ENCODE measurements at regions of chr11 and their contacts with region 1.

Region 1: DNA sequence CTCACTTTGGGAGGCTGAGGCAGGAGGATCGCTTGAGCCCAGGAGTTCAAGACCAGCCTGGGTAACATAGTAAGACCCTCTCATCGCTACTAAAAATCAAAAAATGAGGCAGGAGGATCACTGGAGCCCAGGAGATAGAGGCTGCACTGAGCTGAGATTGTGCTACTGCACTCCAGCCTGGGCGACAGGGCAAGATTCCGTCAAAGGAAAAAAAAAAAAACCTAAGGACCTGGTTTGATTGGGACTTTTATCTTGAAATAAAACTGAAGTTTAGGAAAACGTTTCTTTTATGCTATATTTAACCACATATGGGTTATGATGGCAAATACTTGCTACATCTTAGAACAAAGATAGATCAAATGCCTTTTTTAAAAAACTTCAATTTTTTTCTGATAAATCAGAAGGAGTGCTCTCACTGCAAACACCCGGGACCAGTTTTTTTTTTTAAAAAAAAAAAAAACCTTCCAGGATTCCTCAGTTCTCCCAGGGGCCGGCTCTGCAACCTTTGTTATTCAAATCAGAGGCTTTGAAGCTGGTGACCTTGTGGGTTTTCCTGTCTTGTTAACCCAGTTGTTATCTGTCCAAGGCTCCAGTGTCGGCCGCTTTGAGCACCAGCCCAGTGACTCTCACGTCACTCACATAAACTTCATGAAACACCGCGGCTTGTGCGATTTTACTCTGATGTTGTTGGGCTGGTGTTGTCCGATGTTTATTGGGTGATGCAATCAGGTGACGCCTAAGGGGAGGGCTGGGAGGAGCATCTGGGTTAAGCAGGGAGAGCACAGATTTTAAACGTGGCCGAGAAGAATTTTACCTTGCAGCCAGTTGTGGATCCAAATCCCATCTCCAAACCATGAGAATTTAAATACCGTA is 24.7 kb upstream of the SLC22A12 start:
- DNase-seq: peak in 1 of 2 experiments; percentile 74
- H3K4me3 ChIP-seq: peak overlapping the region in 3 of 4 experiments; percentile 21 to 53 (median 27); a peak in 4 of 8 replicates
- H3K27ac ChIP-seq: peak overlapping the region; percentile 47; the same call in 1 of the 2 replicates
- H3K4me1 ChIP-seq: peaks cover 0 to 29% (median 19%) of the 10 kb centered on the region in 4 experiments; a peak in 6 of 7 replicates
- H3K27me3 ChIP-seq: peaks cover 0 to 3% (median 0%) of the 10 kb centered on the region in 4 experiments; a peak in 1 of 7 replicates
- CTCF ChIP-seq: no peak
- EP300 ChIP-seq: no peak
- POLR2A ChIP-seq: peak in 1 of 2 experiments; percentile 31; a peak in 2 of 3 replicates
- RAD21 ChIP-seq: no peak

Region 2: GRCh38 chr11:64379817-64380709 is 186.2 kb before region 1 on chr11:
- CTCF ChIA-PET with region 1: no interaction called
- POLR2A ChIA-PET with region 1: no interaction called
- DNase-seq: no peak
- H3K4me3 ChIP-seq: no peak overlapping the region
- H3K27ac ChIP-seq: peak overlapping the region; percentile 2; the same call in 1 of the 2 replicates
- H3K4me1 ChIP-seq: no peaks in the 10 kb centered on the region; a peak in 3 of 7 replicates
- H3K27me3 ChIP-seq: no peaks in the 10 kb centered on the region; a peak in 1 of 7 replicates
- CTCF ChIP-seq: no peak
- EP300 ChIP-seq: no peak
- POLR2A ChIP-seq: no peak
- RAD21 ChIP-seq: no peak

Region 3: GRCh38 chr11:64489831-64490441 is 76.3 kb before region 1 on chr11:
- CTCF ChIA-PET with region 1: interaction called, 10 read pairs
- POLR2A ChIA-PET with region 1: interaction called, 4 read pairs
- DNase-seq: peak; percentile 5 to 90
- H3K4me3 ChIP-seq: no peak overlapping the region
- H3K27ac ChIP-seq: no peak overlapping the region
- H3K4me1 ChIP-seq: no peaks in the 10 kb centered on the region; a peak in 2 of 7 replicates
- H3K27me3 ChIP-seq: peaks cover 3 to 21% (median 13%) of the 10 kb centered on the region in 4 experiments
- CTCF ChIP-seq: peak; percentile 82 to 95 (median 93)
- EP300 ChIP-seq: no peak
- POLR2A ChIP-seq: no peak
- RAD21 ChIP-seq: peak; percentile 89 to 91

Region 4: GRCh38 chr11:64501500-64502427 is 64.5 kb before region 1 on chr11:
- CTCF ChIA-PET with region 1: no interaction called
- POLR2A ChIA-PET with region 1: no interaction called
- DNase-seq: no peak
- H3K4me3 ChIP-seq: no peak overlapping the region
- H3K27ac ChIP-seq: no peak overlapping the region
- H3K4me1 ChIP-seq: no peaks in the 10 kb centered on the region
- H3K27me3 ChIP-seq: peaks cover 0 to 28% (median 8%) of the 10 kb centered on the region in 4 experiments; a peak in 6 of 7 replicates
- CTCF ChIP-seq: no peak
- EP300 ChIP-seq: no peak
- POLR2A ChIP-seq: no peak
- RAD21 ChIP-seq: no peak

Region 5: GRCh38 chr11:64583296-64584232 is 17.3 kb after region 1 on chr11:
- CTCF ChIA-PET with region 1: interaction called, 13 read pairs
- POLR2A ChIA-PET with region 1: interaction called, 3 read pairs
- DNase-seq: no peak
- H3K4me3 ChIP-seq: no peak overlapping the region
- H3K27ac ChIP-seq: no peak overlapping the region
- H3K4me1 ChIP-seq: no peaks in the 10 kb centered on the region
- H3K27me3 ChIP-seq: no peaks in the 10 kb centered on the region; a peak in 2 of 7 replicates
- CTCF ChIP-seq: no peak
- EP300 ChIP-seq: no peak
- POLR2A ChIP-seq: no peak
- RAD21 ChIP-seq: no peak

Region 6: DNA sequence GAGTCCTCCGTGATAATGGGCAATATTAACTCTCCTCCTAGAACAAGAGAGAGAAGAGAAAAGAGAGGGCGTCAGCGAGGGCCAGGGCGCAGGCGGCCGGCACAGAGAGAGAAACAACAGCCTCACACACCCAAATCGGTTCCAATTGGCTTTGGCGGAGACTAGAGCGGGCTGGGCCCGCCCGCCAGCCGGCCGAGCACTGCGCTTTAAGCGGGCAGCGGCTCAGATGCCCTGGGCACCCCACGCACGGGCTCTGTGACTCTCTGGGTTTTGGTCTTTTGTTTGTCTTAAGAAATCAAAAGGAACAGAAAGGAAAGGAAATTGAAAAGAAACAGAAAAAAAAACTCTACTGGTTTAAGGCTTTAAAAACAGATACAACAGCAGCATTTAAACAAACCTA is 41.8 kb after region 1 on chr11:
- CTCF ChIA-PET with region 1: interaction called, 11 read pairs
- POLR2A ChIA-PET with region 1: interaction called, 3 read pairs
- DNase-seq: no peak
- H3K4me3 ChIP-seq: no peak overlapping the region
- H3K27ac ChIP-seq: no peak overlapping the region
- H3K4me1 ChIP-seq: peaks cover 0 to 6% (median 0%) of the 10 kb centered on the region in 4 experiments; a peak in 1 of 7 replicates
- H3K27me3 ChIP-seq: no peaks in the 10 kb centered on the region; a peak in 2 of 7 replicates
- CTCF ChIP-seq: no peak
- EP300 ChIP-seq: no peak
- POLR2A ChIP-seq: no peak
- RAD21 ChIP-seq: no peak

Region 7: GRCh38 chr11:64629796-64630562 is 63.7 kb after region 1 on chr11:
- CTCF ChIA-PET with region 1: interaction called, 11 read pairs
- POLR2A ChIA-PET with region 1: interaction called, 3 read pairs
- DNase-seq: peak; percentile 70 to 100
- H3K4me3 ChIP-seq: peak overlapping the region in 1 of 4 experiments; percentile 5; a peak in 1 of 8 replicates
- H3K27ac ChIP-seq: no peak overlapping the region
- H3K4me1 ChIP-seq: peaks cover 0 to 10% (median 5%) of the 10 kb centered on the region in 4 experiments; a peak in 6 of 7 replicates
- H3K27me3 ChIP-seq: peaks cover 0 to 19% (median 12%) of the 10 kb centered on the region in 4 experiments; a peak in 5 of 7 replicates
- CTCF ChIP-seq: peak; percentile 63 to 87 (median 65)
- EP300 ChIP-seq: no peak
- POLR2A ChIP-seq: no peak
- RAD21 ChIP-seq: peak; percentile 59

Region 8: DNA sequence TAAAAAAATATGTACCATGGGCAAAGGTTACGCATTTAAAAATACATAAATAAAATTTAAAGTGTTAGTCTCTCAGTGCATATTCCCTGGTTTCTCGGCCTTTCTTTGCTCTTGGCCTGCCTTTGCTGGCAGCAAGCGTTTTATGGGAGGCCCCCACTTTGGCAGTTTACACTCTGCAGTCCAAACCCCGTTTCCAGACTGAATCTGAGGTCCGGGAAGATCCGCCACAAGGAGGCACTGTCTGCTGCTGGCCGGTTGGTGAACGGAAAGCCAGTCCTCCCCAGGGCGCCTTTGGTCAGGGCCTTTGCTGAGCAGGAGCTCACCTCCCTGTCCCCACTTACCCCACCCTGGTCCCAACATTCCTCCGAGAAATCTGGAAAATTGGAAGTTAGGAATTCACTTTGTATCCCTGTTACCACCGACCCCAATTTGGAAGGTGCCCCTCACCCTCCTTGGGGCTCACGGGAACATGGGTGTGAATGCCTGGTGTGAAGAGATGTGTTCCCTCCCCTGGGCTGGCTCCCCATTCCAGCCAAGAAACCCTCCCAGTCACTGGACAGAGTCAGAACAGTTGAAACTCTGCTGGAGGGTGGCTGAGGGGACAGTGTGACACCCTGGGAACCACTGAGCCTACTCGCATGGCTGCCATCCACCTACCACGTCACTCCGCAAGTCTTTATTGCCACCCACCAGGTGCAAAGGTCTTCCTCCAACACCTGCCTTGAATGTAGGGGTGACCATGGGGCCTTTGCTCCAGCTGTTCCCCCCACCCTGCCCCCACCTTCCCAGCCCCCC is 221.4 kb after region 1 on chr11:
- CTCF ChIA-PET with region 1: no interaction called
- POLR2A ChIA-PET with region 1: no interaction called
- DNase-seq: peak in 1 of 2 experiments; percentile 89
- H3K4me3 ChIP-seq: no peak overlapping the region
- H3K27ac ChIP-seq: no peak overlapping the region
- H3K4me1 ChIP-seq: no peaks in the 10 kb centered on the region
- H3K27me3 ChIP-seq: no peaks in the 10 kb centered on the region
- CTCF ChIP-seq: peak; percentile 87 to 91 (median 90)
- EP300 ChIP-seq: no peak
- POLR2A ChIP-seq: no peak
- RAD21 ChIP-seq: peak; percentile 73 to 82

Measured in H1 (cell line).